MCF 10A (cell line): ENCODE measurements at regions of chr20 and their contacts with region 1.

Region 1: GRCh38 chr20:50460460-50461267 is 49.5 kb upstream of the PTPN1 start:
- DNase-seq: peak; percentile 91
- H3K4me3 Mint-ChIP-seq: peak overlapping the region; percentile 32
- H3K27ac Mint-ChIP-seq: peak overlapping the region; percentile 84
- H3K4me1 Mint-ChIP-seq: peaks cover 23% of the 10 kb centered on the region
- H3K27me3 Mint-ChIP-seq: no peaks in the 10 kb centered on the region
- CTCF ChIP-seq: peak; percentile 94

Region 2: DNA sequence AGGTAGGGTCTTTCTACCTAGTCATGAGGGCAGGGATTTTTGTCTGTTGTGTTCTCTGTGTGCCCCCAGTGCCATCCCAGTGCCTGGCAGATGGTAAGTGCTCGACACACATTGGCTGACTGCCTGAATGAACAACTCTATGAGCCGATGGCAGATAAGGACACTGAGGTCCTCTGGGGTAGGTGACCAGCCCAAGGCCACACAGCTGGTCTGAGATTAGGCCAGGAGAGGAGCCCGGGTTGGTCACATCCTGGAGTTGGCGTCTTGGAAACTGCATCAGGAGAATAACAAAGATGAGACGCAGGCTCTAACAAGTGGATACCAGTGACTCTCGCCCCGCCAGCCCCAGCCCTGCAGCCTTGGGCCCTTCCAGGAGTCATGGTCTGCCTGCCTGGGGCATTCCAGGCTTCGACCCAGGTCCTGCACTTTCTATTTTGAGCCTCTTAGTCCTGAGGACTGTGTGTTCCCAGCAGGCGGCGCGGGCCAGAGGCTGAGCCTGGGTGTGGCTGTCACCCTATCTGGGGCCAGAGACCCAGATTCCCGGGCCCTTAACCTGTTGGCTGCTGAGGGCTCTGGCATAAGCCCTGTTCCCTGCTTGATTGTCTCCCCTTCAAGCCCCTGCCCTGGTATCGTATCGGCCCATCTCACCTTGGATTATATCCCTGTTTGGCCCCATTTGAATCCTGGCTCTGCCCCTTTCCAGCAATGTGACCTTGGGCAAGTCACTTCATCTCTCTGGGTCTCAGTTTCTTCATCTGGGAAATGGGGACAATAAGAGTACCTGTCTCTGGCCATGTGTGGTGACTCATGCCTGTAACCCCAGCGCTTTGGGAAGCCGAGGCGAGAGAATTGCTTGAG is 181.8 kb before region 1 on chr20:
- CTCF ChIA-PET with region 1: interaction called, 5 read pairs
- POLR2A ChIA-PET with region 1: interaction called, 3 read pairs
- intact Hi-C with region 1: loop called (anchors 2 kb)
- DNase-seq: peak; percentile 70
- H3K4me3 Mint-ChIP-seq: no peak overlapping the region
- H3K27ac Mint-ChIP-seq: peak overlapping the region; percentile 23
- H3K4me1 Mint-ChIP-seq: peaks cover 22% of the 10 kb centered on the region
- H3K27me3 Mint-ChIP-seq: no peaks in the 10 kb centered on the region
- CTCF ChIP-seq: peak; percentile 39

Region 3: DNA sequence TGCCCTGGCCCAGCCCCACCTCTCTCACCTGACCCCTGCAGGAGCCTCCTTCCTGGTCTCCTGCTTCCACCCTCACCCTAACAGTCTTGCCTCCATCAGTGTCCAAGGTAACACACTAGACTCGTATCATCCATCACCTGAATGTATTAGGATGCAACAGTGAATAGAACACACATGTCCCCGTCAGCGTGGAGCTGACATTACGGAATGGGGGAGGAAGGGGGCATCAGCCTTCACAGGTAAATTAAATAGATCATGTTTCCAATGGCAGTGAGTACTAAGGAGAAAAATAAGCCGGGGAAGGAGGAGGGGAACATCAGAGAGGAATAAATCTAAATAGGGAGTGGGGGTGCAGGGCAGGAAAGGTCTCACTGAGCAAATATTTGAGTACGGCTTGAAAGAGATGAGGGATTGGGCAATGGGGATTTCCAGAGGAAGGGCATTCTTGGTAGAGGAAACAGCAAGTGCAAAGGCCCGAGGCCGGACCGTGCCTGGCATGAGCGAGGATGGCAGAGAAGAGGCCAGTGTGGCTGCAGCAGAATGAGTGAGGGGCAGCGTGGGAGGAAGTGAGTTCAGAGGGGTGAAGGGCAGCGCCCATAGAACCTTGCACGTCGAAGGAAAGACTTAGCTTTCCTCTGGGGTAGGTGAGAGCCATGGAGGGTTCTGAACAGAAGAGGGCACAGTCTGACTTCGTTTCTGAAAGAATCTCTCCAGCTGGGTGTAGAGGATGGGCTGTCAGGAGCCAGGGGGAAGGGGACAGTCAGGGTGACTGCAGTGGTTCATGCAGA is 60.6 kb before region 1 on chr20:
- CTCF ChIA-PET with region 1: interaction called, 14 read pairs
- POLR2A ChIA-PET with region 1: interaction called, 4 read pairs
- intact Hi-C with region 1: loop called (anchors 5 kb)
- DNase-seq: peak; percentile 61
- H3K4me3 Mint-ChIP-seq: no peak overlapping the region
- H3K27ac Mint-ChIP-seq: peak overlapping the region; percentile 39
- H3K4me1 Mint-ChIP-seq: peaks cover 28% of the 10 kb centered on the region
- H3K27me3 Mint-ChIP-seq: no peaks in the 10 kb centered on the region
- CTCF ChIP-seq: no peak

Region 4: GRCh38 chr20:50434653-50435396 is 25.8 kb before region 1 on chr20:
- CTCF ChIA-PET with region 1: interaction called, 26 read pairs
- POLR2A ChIA-PET with region 1: interaction called, 12 read pairs
- intact Hi-C with region 1: no loop called
- DNase-seq: peak; percentile 98
- H3K4me3 Mint-ChIP-seq: no peak overlapping the region
- H3K27ac Mint-ChIP-seq: peak overlapping the region; percentile 94
- H3K4me1 Mint-ChIP-seq: peaks cover 46% of the 10 kb centered on the region
- H3K27me3 Mint-ChIP-seq: no peaks in the 10 kb centered on the region
- CTCF ChIP-seq: no peak

Region 5: GRCh38 chr20:50516180-50516934 is 55.7 kb after region 1 on chr20:
- CTCF ChIA-PET with region 1: interaction called, 15 read pairs
- POLR2A ChIA-PET with region 1: no interaction called
- intact Hi-C with region 1: no loop called
- DNase-seq: no peak
- H3K4me3 Mint-ChIP-seq: no peak overlapping the region
- H3K27ac Mint-ChIP-seq: no peak overlapping the region
- H3K4me1 Mint-ChIP-seq: peaks cover 60% of the 10 kb centered on the region
- H3K27me3 Mint-ChIP-seq: no peaks in the 10 kb centered on the region
- CTCF ChIP-seq: no peak